ENCODE measurements at regions of chr14 and their contacts with region 1.

Region 1: DNA sequence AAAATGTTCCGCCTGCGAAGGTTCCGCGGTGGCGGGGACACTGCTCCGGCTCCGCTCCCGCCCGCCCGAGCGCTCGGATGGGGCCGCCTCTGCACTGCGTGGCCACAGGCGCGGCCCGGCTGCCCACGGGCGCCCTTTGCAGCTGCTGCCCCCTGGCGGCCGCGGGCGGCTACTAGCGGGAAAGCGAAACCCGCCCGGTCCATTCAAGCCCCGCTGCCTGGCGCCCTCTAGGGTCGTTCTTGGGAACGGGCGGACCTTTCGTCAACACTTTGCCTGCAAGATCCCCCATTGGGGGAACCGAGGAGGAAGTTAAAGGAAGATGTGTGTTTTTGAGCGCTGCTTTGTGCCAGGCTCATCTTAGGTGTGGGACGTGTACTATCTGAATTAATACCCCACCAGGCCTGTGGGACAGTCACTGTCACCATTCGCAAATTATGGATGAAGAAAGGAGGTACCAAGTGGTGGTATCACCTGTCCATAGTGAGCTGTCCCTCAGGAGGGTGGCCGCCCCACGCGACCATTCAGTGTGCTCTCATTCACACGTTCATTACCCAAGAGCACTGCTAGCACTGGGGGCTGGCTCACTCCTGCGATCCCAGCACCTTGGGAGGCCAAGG is 19.4 kb downstream of the GPR132 start:
- DNase-seq: peak; percentile 59
- H3K4me3 ChIP-seq: no peak overlapping the region
- H3K27ac ChIP-seq: no peak overlapping the region
- H3K4me1 ChIP-seq: peaks cover 8% of the 10 kb centered on the region
- H3K27me3 ChIP-seq: no peaks in the 10 kb centered on the region
- CTCF ChIP-seq: peak; percentile 92 to 97

Region 2: GRCh38 chr14:104882325-104883115 is 163.3 kb before region 1 on chr14:
- CTCF ChIA-PET with region 1: no interaction called
- dilution Hi-C with region 1: loop called (anchors 10 kb)
- in situ Hi-C with region 1: no loop called
- intact Hi-C with region 1: no loop called
- DNase-seq: peak; percentile 76
- H3K4me3 ChIP-seq: no peak overlapping the region
- H3K27ac ChIP-seq: no peak overlapping the region
- H3K4me1 ChIP-seq: peaks cover 14% of the 10 kb centered on the region
- H3K27me3 ChIP-seq: no peaks in the 10 kb centered on the region
- CTCF ChIP-seq: no peak

Region 3: GRCh38 chr14:104908303-104908702 is 137.5 kb before region 1 on chr14:
- CTCF ChIA-PET with region 1: no interaction called
- dilution Hi-C with region 1: no loop called
- in situ Hi-C with region 1: loop called in 1 of 2 experiments (anchors 10 kb)
- intact Hi-C with region 1: no loop called
- DNase-seq: no peak
- H3K4me3 ChIP-seq: no peak overlapping the region
- H3K27ac ChIP-seq: no peak overlapping the region
- H3K4me1 ChIP-seq: no peaks in the 10 kb centered on the region
- H3K27me3 ChIP-seq: no peaks in the 10 kb centered on the region
- CTCF ChIP-seq: no peak

Region 4: DNA sequence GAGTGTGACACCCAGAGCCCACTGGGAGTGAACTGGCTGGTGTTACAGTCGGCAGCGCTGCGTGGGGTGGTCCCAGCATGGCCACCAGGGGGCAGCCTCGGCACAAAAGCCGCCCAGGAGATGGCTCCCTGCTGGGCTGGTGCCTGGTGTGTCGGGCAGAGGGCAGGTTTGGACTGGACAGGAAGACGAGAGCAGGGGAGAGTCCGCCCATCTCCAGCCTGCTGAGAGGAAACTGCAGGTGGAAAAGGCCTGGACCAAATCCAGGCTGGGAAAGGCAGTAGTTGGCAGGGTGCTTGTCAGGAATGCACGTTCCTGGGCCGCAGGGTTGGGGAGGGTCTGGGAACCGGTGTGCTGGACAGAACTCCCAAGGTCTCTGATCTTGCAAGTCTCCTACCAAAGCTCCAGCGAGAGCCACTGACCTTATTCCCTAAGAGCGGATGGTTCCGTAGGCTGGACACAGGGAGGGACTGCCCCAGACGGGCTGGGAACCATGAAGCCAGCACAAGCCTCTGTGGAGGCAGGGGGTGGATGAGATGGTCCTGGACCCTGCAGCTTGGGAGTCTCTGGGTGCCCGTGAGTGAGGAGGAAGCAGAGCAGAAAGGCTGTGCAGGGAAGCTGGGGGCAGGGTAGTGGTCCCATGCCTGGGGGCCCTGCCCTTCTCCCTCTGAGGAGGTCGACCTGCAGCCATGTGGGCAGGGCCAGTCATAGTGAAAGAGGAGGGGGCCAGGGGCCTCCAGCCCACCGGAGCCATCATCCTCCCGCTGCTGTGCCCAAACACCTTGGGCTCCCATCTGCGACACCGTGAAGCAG is 69.4 kb before region 1 on chr14:
- CTCF ChIA-PET with region 1: no interaction called
- dilution Hi-C with region 1: no loop called
- in situ Hi-C with region 1: loop called in 1 of 2 experiments (anchors 5 kb)
- intact Hi-C with region 1: loop called (anchors 1 kb)
- DNase-seq: peak; percentile 86
- H3K4me3 ChIP-seq: peak overlapping the region; percentile 75 to 82 (median 79)
- H3K27ac ChIP-seq: no peak overlapping the region
- H3K4me1 ChIP-seq: peaks cover 78% of the 10 kb centered on the region
- H3K27me3 ChIP-seq: no peaks in the 10 kb centered on the region
- CTCF ChIP-seq: peak; percentile 81 to 97

Region 5: GRCh38 chr14:105020815-105021655 is 24.8 kb before region 1 on chr14 and contains the start of gene CDCA4:
- CTCF ChIA-PET with region 1: no interaction called
- dilution Hi-C with region 1: no loop called
- in situ Hi-C with region 1: no loop called
- intact Hi-C with region 1: loop called (anchors 2 kb)
- DNase-seq: peak; percentile 96
- H3K4me3 ChIP-seq: peak within 1 kb of the TSS; percentile 82 to 97 (median 95)
- H3K27ac ChIP-seq: peak within 1 kb of the TSS; percentile 94
- H3K4me1 ChIP-seq: peaks cover 68% of the 10 kb centered on the region
- H3K27me3 ChIP-seq: no peaks in the 10 kb centered on the region
- CTCF ChIP-seq: no peak
- total RNA-seq, gene CDCA4: 38.2 to 61.7 TPM

Region 6: GRCh38 chr14:105107781-105108515 is 62.1 kb after region 1 on chr14:
- CTCF ChIA-PET with region 1: no interaction called
- dilution Hi-C with region 1: no loop called
- in situ Hi-C with region 1: no loop called
- intact Hi-C with region 1: no loop called
- DNase-seq: no peak
- H3K4me3 ChIP-seq: no peak overlapping the region
- H3K27ac ChIP-seq: no peak overlapping the region
- H3K4me1 ChIP-seq: no peaks in the 10 kb centered on the region
- H3K27me3 ChIP-seq: no peaks in the 10 kb centered on the region
- CTCF ChIP-seq: no peak

Measured in mammary epithelial cell (primary cell).